Heart left ventricle (tissue), 16 donors: ENCODE measurements at regions of chr16 and their contacts with region 1.

Region 1: GRCh38 chr16:75555707-75556430 is at the start of gene TMEM231:
- DNase-seq: peak; percentile 98 to 99 (median 99)
- ATAC-seq: peak; percentile 92 to 97 (median 96)
- H3K4me3 ChIP-seq: peak within 1 kb of the TSS; percentile 50 to 87 (median 76)
- H3K27ac ChIP-seq: peak within 1 kb of the TSS; percentile 64 to 89 (median 78)
- H3K4me1 ChIP-seq: peaks cover 0 to 39% (median 16%) of the 10 kb centered on the region in 12 donors
- H3K27me3 ChIP-seq: no peaks in the 10 kb centered on the region
- CTCF ChIP-seq: peak in 1 of 12 donors; percentile 9
- POLR2A ChIP-seq: peak in 1 of 2 donors; percentile 48
- total RNA-seq, gene TMEM231: 4.4 to 9.1 (median 7.1) TPM

Region 2: GRCh38 chr16:75464130-75464918 is 91.5 kb before region 1 on chr16 and contains the start of gene TMEM170A:
- intact Hi-C with region 1: loop called in 1 of 10 experiments (anchors 2 kb)
- DNase-seq: peak; percentile 99 to 100 (median 100)
- ATAC-seq: peak; percentile 97 to 99 (median 98)
- H3K4me3 ChIP-seq: peak within 1 kb of the TSS; percentile 67 to 100 (median 90)
- H3K27ac ChIP-seq: peak within 1 kb of the TSS; percentile 84 to 100 (median 96)
- H3K4me1 ChIP-seq: peaks cover 0 to 39% (median 13%) of the 10 kb centered on the region in 12 donors
- H3K27me3 ChIP-seq: no peaks in the 10 kb centered on the region
- CTCF ChIP-seq: peak in 11 of 12 donors; percentile 100
- POLR2A ChIP-seq: peak; percentile 73 to 97
- total RNA-seq, gene TMEM170A: 7.7 to 14.6 (median 9.5) TPM

Region 3: GRCh38 chr16:75519881-75520280 is 36.0 kb before region 1 on chr16:
- intact Hi-C with region 1: loop called in 4 of 10 experiments (anchors 5 kb)
- DNase-seq: no peak
- ATAC-seq: no peak
- H3K4me3 ChIP-seq: no peak overlapping the region
- H3K27ac ChIP-seq: no peak overlapping the region
- H3K4me1 ChIP-seq: peaks cover 0 to 10% (median 6%) of the 10 kb centered on the region in 12 donors
- H3K27me3 ChIP-seq: no peaks in the 10 kb centered on the region
- CTCF ChIP-seq: no peak
- POLR2A ChIP-seq: no peak

Region 4: DNA sequence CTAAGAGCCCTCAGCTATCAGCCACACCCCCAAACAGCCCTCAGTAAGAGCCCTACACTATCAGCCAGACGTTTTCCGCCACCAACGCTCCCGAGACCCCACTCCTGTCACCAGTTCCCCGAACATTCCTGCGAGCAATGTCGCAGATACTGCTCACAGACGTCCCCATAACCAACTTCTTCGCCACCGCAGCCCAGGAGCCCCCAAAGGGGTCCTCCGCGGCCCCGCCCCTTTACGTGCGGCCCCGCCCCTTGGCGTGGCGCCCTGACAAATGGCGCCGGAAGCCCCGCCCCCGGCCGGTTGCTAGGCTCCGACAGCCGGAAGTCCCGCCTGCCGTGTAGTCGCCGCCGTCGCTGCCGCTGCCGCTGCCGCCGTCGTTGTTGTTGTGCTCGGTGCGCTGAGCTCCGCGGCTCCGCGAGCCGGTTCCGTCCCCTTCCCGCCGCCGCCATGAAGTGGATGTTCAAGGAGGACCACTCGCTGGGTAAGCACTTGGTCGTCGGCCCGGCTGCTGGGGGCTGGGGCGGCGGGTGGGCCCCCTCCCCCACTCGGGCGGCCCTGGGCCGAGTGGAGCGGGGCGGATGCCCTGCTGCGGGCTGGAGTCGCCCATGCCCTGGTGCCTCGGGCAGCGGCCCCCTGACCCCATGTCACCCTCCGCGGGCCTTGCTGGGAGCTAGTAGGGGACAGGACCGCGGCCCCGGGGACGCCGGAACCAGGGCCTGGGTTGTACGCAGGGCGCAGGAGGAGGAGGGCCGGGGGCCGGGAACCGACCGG is 10.4 kb after region 1 on chr16 and contains the start of gene GABARAPL2:
- intact Hi-C with region 1: loop called in 1 of 10 experiments (anchors 1 kb)
- DNase-seq: peak; percentile 83 to 95 (median 87)
- ATAC-seq: peak; percentile 74 to 94 (median 93)
- H3K4me3 ChIP-seq: peak within 1 kb of the TSS; percentile 72 to 100 (median 92)
- H3K27ac ChIP-seq: peak within 1 kb of the TSS; percentile 59 to 95 (median 84)
- H3K4me1 ChIP-seq: peaks cover 3 to 55% (median 48%) of the 10 kb centered on the region in 12 donors
- H3K27me3 ChIP-seq: no peaks in the 10 kb centered on the region
- CTCF ChIP-seq: no peak
- POLR2A ChIP-seq: peak; percentile 77 to 90
- total RNA-seq, gene GABARAPL2: 145 to 256 (median 210) TPM

Region 5: GRCh38 chr16:75647492-75648264 is 91.8 kb after region 1 on chr16 and contains the starts of genes KARS1 and TERF2IP:
- intact Hi-C with region 1: no loop called
- DNase-seq: peak; percentile 93 to 95 (median 94)
- ATAC-seq: peak; percentile 96 to 98 (median 98)
- H3K4me3 ChIP-seq: peak within 1 kb of the TSS; percentile 85 to 99 (median 95)
- H3K27ac ChIP-seq: peak within 1 kb of the TSS; percentile 93 to 99 (median 97)
- H3K4me1 ChIP-seq: peaks cover 21 to 65% (median 48%) of the 10 kb centered on the region in 12 donors
- H3K27me3 ChIP-seq: no peaks in the 10 kb centered on the region
- CTCF ChIP-seq: no peak
- POLR2A ChIP-seq: peak; percentile 79 to 97
- total RNA-seq, gene KARS1: 111 to 152 (median 129) TPM
- total RNA-seq, gene TERF2IP: 57.0 to 76.7 (median 73.1) TPM